Thyroid gland (tissue), 4 donors: ENCODE measurements at regions of chr1 and their contacts with region 1.

Region 1: GRCh38 chr1:227946624-227947385 is 927 bp downstream of the WNT9A start:
- DNase-seq: peak; percentile 89 to 93
- H3K4me3 ChIP-seq: peak overlapping the region in 2 of 3 donors; percentile 1 to 31
- H3K27ac ChIP-seq: peak overlapping the region; percentile 68 to 82 (median 78)
- H3K4me1 ChIP-seq: peaks cover 21 to 29% of the 10 kb centered on the region in 2 donors
- H3K27me3 ChIP-seq: no peaks in the 10 kb centered on the region
- CTCF ChIP-seq: peak; percentile 59 to 92 (median 75)
- POLR2A ChIP-seq: no peak

Region 2: GRCh38 chr1:227482023-227482299 is 464.8 kb before region 1 on chr1:
- intact Hi-C with region 1: loop called (anchors 5 kb)
- DNase-seq: no peak
- H3K4me3 ChIP-seq: no peak overlapping the region
- H3K27ac ChIP-seq: no peak overlapping the region
- H3K4me1 ChIP-seq: no peaks in the 10 kb centered on the region
- H3K27me3 ChIP-seq: no peaks in the 10 kb centered on the region
- CTCF ChIP-seq: no peak
- POLR2A ChIP-seq: no peak

Region 3: GRCh38 chr1:227762233-227762911 is 184.4 kb before region 1 on chr1:
- intact Hi-C with region 1: loop called (anchors 5 kb)
- DNase-seq: peak; percentile 89 to 91
- H3K4me3 ChIP-seq: no peak overlapping the region
- H3K27ac ChIP-seq: no peak overlapping the region
- H3K4me1 ChIP-seq: peaks cover 8 to 17% of the 10 kb centered on the region in 2 donors
- H3K27me3 ChIP-seq: no peaks in the 10 kb centered on the region
- CTCF ChIP-seq: peak; percentile 75 to 93 (median 88)
- POLR2A ChIP-seq: no peak

Region 4: GRCh38 chr1:228082135-228082891 is 135.5 kb after region 1 on chr1 and contains the start of gene ARF1:
- intact Hi-C with region 1: loop called (anchors 5 kb)
- DNase-seq: peak; percentile 90 to 91
- H3K4me3 ChIP-seq: peak within 1 kb of the TSS; percentile 97 to 100 (median 100)
- H3K27ac ChIP-seq: peak within 1 kb of the TSS; percentile 98 to 99 (median 99)
- H3K4me1 ChIP-seq: peaks cover 43 to 52% of the 10 kb centered on the region in 2 donors
- H3K27me3 ChIP-seq: no peaks in the 10 kb centered on the region
- CTCF ChIP-seq: peak in 1 of 6 experiments; percentile 18
- POLR2A ChIP-seq: peak; percentile 85 to 95
- total RNA-seq, gene ARF1: 378 to 457 (median 410) TPM